ENCODE measurements at regions of chr1 and their contacts with region 1.

Region 1: GRCh38 chr1:228457396-228458176 is 29.6 kb upstream of the RNF187 start:
- DNase-seq: peak; percentile 80 to 94
- H3K4me3 ChIP-seq: peak overlapping the region; percentile 63 to 93 (median 87)
- H3K27ac ChIP-seq: peak overlapping the region; percentile 91
- H3K4me1 ChIP-seq: peaks cover 0 to 2% (median 0%) of the 10 kb centered on the region in 4 experiments; a peak in 2 of 7 replicates
- H3K27me3 ChIP-seq: 0 out of 7 replicates have a peak, but pooled peaks cover 0 to 2% (median 0%) of the 10 kb centered on the region in 4 experiments
- CTCF ChIP-seq: peak; percentile 38 to 54 (median 45)
- EP300 ChIP-seq: no peak
- POLR2A ChIP-seq: peak; percentile 97
- RAD21 ChIP-seq: peak in 1 of 2 experiments; percentile 43; a peak in 3 of 4 replicates

Region 2: DNA sequence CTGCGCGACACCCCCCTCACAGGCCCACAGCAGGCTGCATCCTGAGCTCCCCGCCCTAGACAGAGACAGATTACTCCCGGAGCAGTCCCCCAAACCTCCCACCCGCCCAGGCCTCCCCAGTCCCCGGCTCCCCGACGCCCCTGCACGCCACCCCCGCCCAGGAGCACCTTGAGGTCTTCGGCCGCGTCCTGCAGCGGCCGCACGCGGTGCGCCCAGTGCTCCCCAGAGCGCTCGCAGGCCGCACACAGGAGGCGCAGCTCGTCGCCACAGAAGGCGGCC is 51.7 kb before region 1 on chr1:
- CTCF ChIA-PET with region 1: interaction called, 4 read pairs
- POLR2A ChIA-PET with region 1: interaction called, 62 read pairs
- DNase-seq: no peak
- H3K4me3 ChIP-seq: peak overlapping the region; percentile 84 to 100 (median 92)
- H3K27ac ChIP-seq: peak overlapping the region; percentile 79; the same call in 1 of the 2 replicates
- H3K4me1 ChIP-seq: peaks cover 3 to 11% (median 8%) of the 10 kb centered on the region in 4 experiments
- H3K27me3 ChIP-seq: 0 out of 7 replicates have a peak, but pooled peaks cover 0 to 2% (median 0%) of the 10 kb centered on the region in 4 experiments
- CTCF ChIP-seq: no peak
- EP300 ChIP-seq: no peak
- POLR2A ChIP-seq: no peak
- RAD21 ChIP-seq: no peak

Region 3: DNA sequence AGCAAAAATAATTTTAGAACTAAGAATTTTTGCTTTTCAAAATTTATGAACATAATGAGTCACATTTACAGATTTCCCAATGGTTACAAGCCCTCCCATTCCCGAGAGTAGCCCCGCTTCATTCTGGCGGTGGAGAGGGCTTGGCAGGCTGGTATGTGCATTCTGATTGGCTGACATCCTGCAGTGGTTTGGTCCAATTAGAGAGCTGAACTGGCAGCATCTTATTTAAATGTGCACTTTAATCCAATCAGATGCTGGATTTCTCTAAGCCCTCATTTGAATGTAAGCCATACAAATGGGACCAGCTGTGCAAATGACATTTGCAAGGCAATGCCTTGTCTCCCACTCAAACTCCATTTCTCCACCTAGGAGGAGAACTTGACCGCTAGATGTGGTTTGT is 22.9 kb before region 1 on chr1:
- CTCF ChIA-PET with region 1: interaction called, 5 read pairs
- POLR2A ChIA-PET with region 1: interaction called, 47 read pairs
- DNase-seq: no peak
- H3K4me3 ChIP-seq: no peak overlapping the region
- H3K27ac ChIP-seq: no peak overlapping the region
- H3K4me1 ChIP-seq: no peaks in the 10 kb centered on the region
- H3K27me3 ChIP-seq: peaks cover 3 to 36% (median 21%) of the 10 kb centered on the region in 4 experiments; a peak in 6 of 7 replicates
- CTCF ChIP-seq: no peak
- EP300 ChIP-seq: no peak
- POLR2A ChIP-seq: no peak
- RAD21 ChIP-seq: no peak

Region 4: GRCh38 chr1:228445843-228446650 is 11.5 kb before region 1 on chr1:
- CTCF ChIA-PET with region 1: interaction called, 23 read pairs
- POLR2A ChIA-PET with region 1: interaction called, 82 read pairs
- DNase-seq: peak in 1 of 2 experiments; percentile 70
- H3K4me3 ChIP-seq: peak overlapping the region; percentile 31 to 71 (median 54)
- H3K27ac ChIP-seq: no peak overlapping the region
- H3K4me1 ChIP-seq: peaks cover 0 to 11% (median 2%) of the 10 kb centered on the region in 4 experiments; a peak in 5 of 7 replicates
- H3K27me3 ChIP-seq: peaks cover 12 to 76% (median 52%) of the 10 kb centered on the region in 4 experiments
- CTCF ChIP-seq: no peak
- EP300 ChIP-seq: no peak
- POLR2A ChIP-seq: peak in 1 of 2 experiments; percentile 41; a peak in 1 of 3 replicates
- RAD21 ChIP-seq: no peak; a peak in 1 of 4 replicates

Region 5: DNA sequence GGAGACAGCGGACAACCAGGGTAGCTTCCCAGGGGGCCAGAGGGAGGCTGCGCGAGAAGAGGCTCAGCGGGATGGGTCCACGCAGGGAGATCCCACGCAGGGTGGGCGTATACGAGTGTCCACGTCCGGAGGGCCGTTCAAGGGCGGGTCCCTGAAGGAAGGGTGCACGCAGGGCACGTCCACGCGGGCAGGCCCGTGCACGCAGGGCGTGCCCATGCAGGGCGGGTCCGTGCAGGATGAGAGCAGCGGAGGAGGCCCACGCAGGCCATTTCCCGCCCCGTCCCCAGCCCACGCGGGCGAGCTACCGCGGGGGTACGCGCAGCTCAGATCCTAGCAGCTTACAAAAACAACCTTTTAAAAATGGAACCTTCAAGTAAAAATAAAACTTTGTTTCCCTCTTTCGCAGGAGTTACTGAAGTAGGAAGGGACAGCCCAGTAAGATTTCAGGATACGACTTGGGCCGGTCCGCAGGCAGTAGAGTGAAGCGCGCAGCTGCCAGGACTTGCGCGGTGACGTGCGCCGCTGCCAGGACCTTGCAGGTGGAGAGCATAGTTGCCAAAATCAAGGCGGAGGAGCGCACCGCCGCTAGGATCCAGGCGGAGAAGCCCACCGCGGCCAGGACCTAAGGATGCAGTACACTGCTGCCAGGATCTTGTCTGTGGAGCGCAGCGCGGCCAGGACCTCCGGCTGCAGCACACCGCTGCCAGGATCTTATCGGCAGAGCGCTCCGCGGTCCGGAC is 29.2 kb after region 1 on chr1:
- CTCF ChIA-PET with region 1: interaction called, 5 read pairs
- POLR2A ChIA-PET with region 1: interaction called, 82 read pairs
- DNase-seq: peak in 1 of 2 experiments; percentile 90
- H3K4me3 ChIP-seq: peak overlapping the region; percentile 76 to 87 (median 85)
- H3K27ac ChIP-seq: peak overlapping the region; percentile 99
- H3K4me1 ChIP-seq: peaks cover 0 to 10% (median 6%) of the 10 kb centered on the region in 4 experiments; a peak in 6 of 7 replicates
- H3K27me3 ChIP-seq: no peaks in the 10 kb centered on the region
- CTCF ChIP-seq: no peak
- EP300 ChIP-seq: no peak
- POLR2A ChIP-seq: no peak
- RAD21 ChIP-seq: no peak

Region 6: GRCh38 chr1:228500901-228501871 is 43.6 kb after region 1 on chr1:
- CTCF ChIA-PET with region 1: interaction called, 4 read pairs
- POLR2A ChIA-PET with region 1: interaction called, 21 read pairs
- DNase-seq: peak; percentile 61 to 92
- H3K4me3 ChIP-seq: peak overlapping the region in 1 of 4 experiments; percentile 17; a peak in 1 of 8 replicates
- H3K27ac ChIP-seq: no peak overlapping the region
- H3K4me1 ChIP-seq: peaks cover 0 to 4% (median 2%) of the 10 kb centered on the region in 4 experiments; a peak in 4 of 7 replicates
- H3K27me3 ChIP-seq: peaks cover 0 to 24% (median 18%) of the 10 kb centered on the region in 4 experiments; a peak in 6 of 7 replicates
- CTCF ChIP-seq: peak; percentile 84 to 95 (median 89)
- EP300 ChIP-seq: no peak
- POLR2A ChIP-seq: no peak
- RAD21 ChIP-seq: peak; percentile 82